CD8-positive, alpha-beta memory T cell (primary cell): ENCODE measurements at regions of chr6 and their contacts with region 1.

Region 1: DNA sequence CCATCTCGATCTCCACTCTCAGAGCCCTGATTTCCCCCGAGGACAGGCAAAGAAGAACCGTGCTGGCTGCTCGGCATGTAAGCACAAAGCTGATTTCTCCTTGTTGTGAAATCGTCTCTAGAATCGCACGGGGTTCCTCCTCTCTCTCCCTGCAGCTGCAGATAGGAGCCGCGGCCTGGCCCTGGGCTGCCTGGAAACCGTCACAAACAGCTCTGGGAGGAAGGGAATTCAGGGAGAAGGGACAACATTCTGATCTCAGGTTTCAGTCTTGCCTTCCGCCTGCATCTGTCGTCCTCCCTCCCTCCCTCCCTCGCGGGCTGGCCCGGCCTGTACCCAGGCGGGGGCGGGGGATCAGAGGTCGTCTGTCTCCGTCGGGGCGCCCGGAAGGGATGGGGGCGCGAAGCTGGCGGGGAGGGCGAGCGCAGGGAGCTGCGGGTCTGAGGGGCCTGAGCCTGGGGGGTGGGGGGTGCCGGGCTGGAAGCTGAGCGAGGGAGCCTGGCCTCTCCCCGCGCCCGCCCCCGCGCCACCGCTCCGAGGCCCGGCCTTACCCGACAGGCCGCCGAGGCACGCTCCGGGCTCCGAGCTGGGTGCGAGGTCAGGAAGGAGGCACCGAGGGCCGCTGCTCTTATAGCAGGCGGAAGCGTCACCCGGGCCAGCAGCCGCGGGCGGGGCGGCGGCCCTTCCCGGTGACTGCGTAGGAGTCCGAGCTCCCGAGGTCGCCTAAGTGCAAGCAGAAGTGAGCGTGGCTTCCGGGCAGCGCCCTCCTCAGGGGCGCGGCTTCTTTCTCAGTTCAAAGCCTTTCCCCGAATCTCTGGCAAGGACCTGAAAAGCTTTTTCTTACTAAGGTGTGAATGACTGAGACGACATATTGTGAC is at the start of gene SERPINB1:
- DNase-seq: peak; percentile 55 to 82 (median 69)
- H3K4me3 ChIP-seq: peak within 1 kb of the TSS; percentile 82
- H3K4me3 Mint-ChIP-seq: peak within 1 kb of the TSS; percentile 88 to 95 (median 90)
- H3K27ac ChIP-seq: peak within 1 kb of the TSS; percentile 82
- H3K27ac Mint-ChIP-seq: peak within 1 kb of the TSS; percentile 90 to 98 (median 94)
- H3K4me1 ChIP-seq: peaks cover 33% of the 10 kb centered on the region
- H3K4me1 Mint-ChIP-seq: peaks cover 43 to 60% (median 52%) of the 10 kb centered on the region in 3 donors
- H3K27me3 ChIP-seq: no peaks in the 10 kb centered on the region
- H3K27me3 Mint-ChIP-seq: no peaks in the 10 kb centered on the region
- total RNA-seq, gene SERPINB1: 40.4 to 42.4 TPM

Region 2: GRCh38 chr6:2353412-2354137 is 487.9 kb before region 1 on chr6:
- CTCF ChIA-PET with region 1: no interaction called
- POLR2A ChIA-PET with region 1: no interaction called
- DNase-seq: peak; percentile 4 to 57 (median 12)
- H3K4me3 ChIP-seq: no peak overlapping the region
- H3K4me3 Mint-ChIP-seq: no peak overlapping the region
- H3K27ac ChIP-seq: no peak overlapping the region
- H3K27ac Mint-ChIP-seq: no peak overlapping the region
- H3K4me1 ChIP-seq: no peaks in the 10 kb centered on the region
- H3K4me1 Mint-ChIP-seq: no peaks in the 10 kb centered on the region
- H3K27me3 ChIP-seq: no peaks in the 10 kb centered on the region
- H3K27me3 Mint-ChIP-seq: no peaks in the 10 kb centered on the region

Region 3: DNA sequence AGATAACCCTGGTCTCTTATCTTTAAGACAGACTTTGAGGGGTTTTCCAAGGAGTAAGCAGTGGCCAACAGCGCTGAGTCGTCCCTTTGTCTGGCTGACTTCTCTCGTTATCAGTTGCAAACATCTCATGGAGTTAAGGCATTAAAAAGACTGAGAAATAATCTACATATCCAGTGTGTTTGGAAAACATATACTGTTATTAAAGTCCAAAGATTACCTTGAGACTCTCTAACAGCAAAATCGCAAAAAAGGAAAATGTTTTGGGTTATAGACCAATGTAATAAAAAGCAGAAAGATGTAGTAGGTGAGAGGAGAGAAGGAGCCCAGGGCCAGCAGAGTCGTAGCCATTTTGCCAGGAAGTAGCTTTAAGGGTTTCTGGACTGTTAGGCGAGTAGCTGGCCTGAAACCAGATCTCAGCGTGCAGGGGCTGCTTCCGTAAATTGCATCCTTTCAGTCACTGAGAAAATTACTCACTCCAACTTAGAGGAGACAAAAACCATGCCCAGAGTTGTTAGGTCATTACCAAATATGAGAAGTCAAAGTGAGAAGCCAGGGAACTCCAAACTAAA is 115.4 kb before region 1 on chr6:
- CTCF ChIA-PET with region 1: no interaction called
- POLR2A ChIA-PET with region 1: no interaction called
- DNase-seq: no peak
- H3K4me3 ChIP-seq: no peak overlapping the region
- H3K4me3 Mint-ChIP-seq: no peak overlapping the region
- H3K27ac ChIP-seq: peak overlapping the region; percentile 6
- H3K27ac Mint-ChIP-seq: no peak overlapping the region
- H3K4me1 ChIP-seq: no peaks in the 10 kb centered on the region
- H3K4me1 Mint-ChIP-seq: no peaks in the 10 kb centered on the region
- H3K27me3 ChIP-seq: peaks cover 5% of the 10 kb centered on the region
- H3K27me3 Mint-ChIP-seq: peaks cover 14 to 25% of the 10 kb centered on the region in 2 donors

Region 4: DNA sequence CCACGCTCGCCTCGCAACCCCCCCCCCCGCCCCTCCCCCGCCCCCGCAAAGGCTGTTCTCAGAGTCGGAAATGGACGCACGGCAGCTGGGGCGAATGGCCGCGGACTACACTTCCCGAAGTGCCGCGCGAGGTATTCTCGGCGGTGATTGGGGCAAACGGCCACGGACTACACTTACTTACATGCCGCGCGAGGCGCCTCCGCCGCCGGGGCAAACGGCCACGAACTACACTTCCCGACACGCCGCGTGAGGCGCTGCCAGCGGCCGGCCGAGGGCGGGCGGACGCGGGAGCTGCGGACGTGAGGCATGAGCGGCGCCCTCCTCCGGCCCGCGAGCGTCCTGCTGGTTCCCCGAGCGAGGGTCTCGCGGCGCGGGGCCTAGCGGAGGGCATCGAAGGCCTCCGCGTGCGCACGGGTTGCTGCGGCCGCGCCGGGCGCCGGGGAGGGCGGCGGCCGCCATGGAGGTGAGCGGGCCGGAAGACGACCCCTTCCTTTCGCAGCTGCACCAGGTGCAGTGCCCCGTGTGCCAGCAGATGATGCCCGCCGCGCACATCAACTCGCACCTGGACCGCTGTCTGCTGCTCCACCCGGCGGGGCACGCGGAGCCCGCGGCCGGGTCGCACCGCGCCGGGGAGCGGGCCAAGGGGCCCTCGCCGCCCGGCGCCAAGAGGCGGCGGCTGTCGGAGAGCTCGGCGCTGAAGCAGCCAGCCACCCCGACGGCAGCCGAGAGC is 76.2 kb before region 1 on chr6 and contains the start of gene WRNIP1:
- CTCF ChIA-PET with region 1: interaction called, 4 read pairs
- POLR2A ChIA-PET with region 1: interaction called, 25 read pairs
- DNase-seq: peak; percentile 92 to 99 (median 96)
- H3K4me3 ChIP-seq: peak within 1 kb of the TSS; percentile 85
- H3K4me3 Mint-ChIP-seq: peak within 1 kb of the TSS; percentile 90 to 98 (median 93)
- H3K27ac ChIP-seq: peak within 1 kb of the TSS; percentile 96
- H3K27ac Mint-ChIP-seq: peak within 1 kb of the TSS; percentile 96 to 100 (median 99)
- H3K4me1 ChIP-seq: peaks cover 34% of the 10 kb centered on the region
- H3K4me1 Mint-ChIP-seq: peaks cover 54 to 61% (median 59%) of the 10 kb centered on the region in 3 donors
- H3K27me3 ChIP-seq: no peaks in the 10 kb centered on the region
- H3K27me3 Mint-ChIP-seq: no peaks in the 10 kb centered on the region
- total RNA-seq, gene WRNIP1: 58.5 to 58.7 TPM

Region 5: GRCh38 chr6:2783188-2783963 is 58.1 kb before region 1 on chr6:
- CTCF ChIA-PET with region 1: no interaction called
- POLR2A ChIA-PET with region 1: no interaction called
- DNase-seq: no peak
- H3K4me3 ChIP-seq: no peak overlapping the region
- H3K4me3 Mint-ChIP-seq: no peak overlapping the region
- H3K27ac ChIP-seq: peak overlapping the region; percentile 28
- H3K27ac Mint-ChIP-seq: peak overlapping the region in 5 of 8 donors; percentile 4 to 77 (median 36)
- H3K4me1 ChIP-seq: no peaks in the 10 kb centered on the region
- H3K4me1 Mint-ChIP-seq: peaks cover 15 to 30% (median 23%) of the 10 kb centered on the region in 3 donors
- H3K27me3 ChIP-seq: no peaks in the 10 kb centered on the region
- H3K27me3 Mint-ChIP-seq: no peaks in the 10 kb centered on the region

Region 6: DNA sequence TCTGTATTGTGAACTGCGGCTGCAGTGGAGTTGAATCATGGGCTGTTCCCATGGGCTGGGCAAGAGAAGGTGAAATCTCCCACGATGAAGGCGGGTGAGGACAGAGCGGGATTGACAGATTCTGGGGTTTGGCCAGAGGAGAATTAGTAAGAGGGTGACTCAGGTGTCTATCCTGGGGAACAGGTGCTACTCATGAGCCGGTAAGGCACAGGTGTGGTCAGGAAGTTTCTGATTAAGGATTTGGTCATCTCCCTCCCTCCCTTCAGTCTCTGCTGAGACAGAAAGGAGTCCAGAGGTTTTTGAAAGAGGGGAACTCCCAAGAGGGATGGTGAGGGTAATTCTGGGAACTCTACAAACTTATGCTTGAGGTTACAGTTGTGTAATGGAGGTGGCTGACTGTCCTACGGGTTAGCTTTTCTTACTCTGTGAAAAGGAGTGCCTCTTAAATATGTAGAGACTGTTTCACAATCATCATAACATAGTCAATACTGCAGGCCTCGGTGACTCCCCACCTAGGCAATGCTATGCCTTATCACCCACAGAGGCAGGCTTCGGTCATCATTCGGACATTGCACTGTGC is 31.3 kb before region 1 on chr6:
- CTCF ChIA-PET with region 1: no interaction called
- POLR2A ChIA-PET with region 1: no interaction called
- DNase-seq: no peak
- H3K4me3 ChIP-seq: no peak overlapping the region
- H3K4me3 Mint-ChIP-seq: no peak overlapping the region
- H3K27ac ChIP-seq: no peak overlapping the region
- H3K27ac Mint-ChIP-seq: peak overlapping the region in 1 of 8 donors; percentile 14
- H3K4me1 ChIP-seq: no peaks in the 10 kb centered on the region
- H3K4me1 Mint-ChIP-seq: no peaks in the 10 kb centered on the region
- H3K27me3 ChIP-seq: no peaks in the 10 kb centered on the region
- H3K27me3 Mint-ChIP-seq: peaks cover 0 to 2% of the 10 kb centered on the region in 2 donors

Region 7: GRCh38 chr6:2857580-2858337 is 16.3 kb after region 1 on chr6:
- CTCF ChIA-PET with region 1: interaction called, 22 read pairs
- POLR2A ChIA-PET with region 1: interaction called, 18 read pairs
- DNase-seq: peak; percentile 49 to 90 (median 72)
- H3K4me3 ChIP-seq: peak overlapping the region; percentile 35
- H3K4me3 Mint-ChIP-seq: peak overlapping the region; percentile 81 to 89 (median 84)
- H3K27ac ChIP-seq: peak overlapping the region; percentile 85
- H3K27ac Mint-ChIP-seq: peak overlapping the region; percentile 91 to 100 (median 99)
- H3K4me1 ChIP-seq: peaks cover 88% of the 10 kb centered on the region
- H3K4me1 Mint-ChIP-seq: peaks cover 85 to 96% (median 88%) of the 10 kb centered on the region in 3 donors
- H3K27me3 ChIP-seq: no peaks in the 10 kb centered on the region
- H3K27me3 Mint-ChIP-seq: peaks cover 0 to 1% of the 10 kb centered on the region in 2 donors

Region 8: GRCh38 chr6:2911171-2911570 is 69.7 kb after region 1 on chr6:
- CTCF ChIA-PET with region 1: interaction called, 61 read pairs
- POLR2A ChIA-PET with region 1: interaction called, 12 read pairs
- DNase-seq: no peak
- H3K4me3 ChIP-seq: no peak overlapping the region
- H3K4me3 Mint-ChIP-seq: no peak overlapping the region
- H3K27ac ChIP-seq: no peak overlapping the region
- H3K27ac Mint-ChIP-seq: no peak overlapping the region
- H3K4me1 ChIP-seq: no peaks in the 10 kb centered on the region
- H3K4me1 Mint-ChIP-seq: peaks cover 8 to 22% (median 22%) of the 10 kb centered on the region in 3 donors
- H3K27me3 ChIP-seq: no peaks in the 10 kb centered on the region
- H3K27me3 Mint-ChIP-seq: no peaks in the 10 kb centered on the region

Region 9: GRCh38 chr6:2917065-2917464 is 75.6 kb after region 1 on chr6:
- CTCF ChIA-PET with region 1: interaction called, 61 read pairs
- POLR2A ChIA-PET with region 1: interaction called, 12 read pairs
- DNase-seq: no peak
- H3K4me3 ChIP-seq: no peak overlapping the region
- H3K4me3 Mint-ChIP-seq: no peak overlapping the region
- H3K27ac ChIP-seq: no peak overlapping the region
- H3K27ac Mint-ChIP-seq: peak overlapping the region in 1 of 8 donors; percentile 12
- H3K4me1 ChIP-seq: peaks cover 8% of the 10 kb centered on the region
- H3K4me1 Mint-ChIP-seq: peaks cover 19 to 29% (median 28%) of the 10 kb centered on the region in 3 donors
- H3K27me3 ChIP-seq: no peaks in the 10 kb centered on the region
- H3K27me3 Mint-ChIP-seq: no peaks in the 10 kb centered on the region